Heart right ventricle (tissue), 16 donors: ENCODE measurements at regions of chr16 and their contacts with region 1.

Region 1: DNA sequence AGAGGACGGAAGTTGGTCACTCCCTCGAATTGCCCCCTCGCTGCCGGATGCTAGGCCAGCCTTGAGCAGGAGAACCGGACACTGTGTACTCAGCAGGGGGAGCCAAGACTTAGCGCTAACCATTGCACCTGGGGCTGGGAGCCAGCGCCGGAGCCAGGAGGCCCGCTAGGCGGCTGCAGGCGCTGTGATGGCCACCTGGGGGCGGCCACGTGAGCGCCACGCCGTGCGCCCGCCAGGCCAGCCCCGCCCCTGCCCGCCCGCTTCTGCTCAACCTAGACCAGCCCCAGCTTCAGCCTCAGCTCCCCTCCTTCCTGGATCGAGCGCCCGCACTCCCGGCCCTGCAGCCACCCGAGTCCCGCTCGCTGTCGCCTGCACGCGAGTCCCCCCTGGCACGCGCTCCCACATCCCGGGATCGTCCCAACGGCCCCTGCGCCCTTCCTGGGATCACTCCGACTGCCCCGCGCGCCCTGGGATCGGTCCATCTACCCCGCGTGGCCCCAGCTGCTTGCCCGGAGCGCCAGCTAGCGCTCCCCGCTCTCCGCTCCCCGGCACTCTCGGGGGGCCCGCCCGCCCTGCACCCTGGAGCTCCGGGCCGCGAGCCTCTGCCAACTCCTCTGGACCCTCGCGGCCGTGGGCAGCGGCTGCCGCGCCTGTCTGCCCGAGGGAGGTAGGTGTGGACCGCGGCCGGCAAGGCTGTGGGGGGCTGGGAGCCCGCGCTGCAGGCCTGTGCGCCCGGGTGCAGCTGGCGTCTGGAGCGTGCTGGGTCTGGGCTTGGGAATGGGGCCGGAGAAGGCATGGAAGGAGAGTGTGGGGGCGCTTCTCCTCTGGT is at the start of gene EEF2K:
- DNase-seq: peak; percentile 90 to 93
- ATAC-seq: peak; percentile 91 to 96 (median 94)
- H3K4me3 ChIP-seq: peak within 1 kb of the TSS; percentile 74 to 97 (median 88)
- H3K27ac ChIP-seq: peak within 1 kb of the TSS; percentile 84 to 97 (median 92)
- H3K4me1 ChIP-seq: peaks cover 0 to 52% (median 29%) of the 10 kb centered on the region in 9 donors
- H3K27me3 ChIP-seq: no peaks in the 10 kb centered on the region
- CTCF ChIP-seq: peak; percentile 74 to 96 (median 91)
- total RNA-seq, gene EEF2K: 17.2 to 38.9 (median 23.2) TPM

Region 2: DNA sequence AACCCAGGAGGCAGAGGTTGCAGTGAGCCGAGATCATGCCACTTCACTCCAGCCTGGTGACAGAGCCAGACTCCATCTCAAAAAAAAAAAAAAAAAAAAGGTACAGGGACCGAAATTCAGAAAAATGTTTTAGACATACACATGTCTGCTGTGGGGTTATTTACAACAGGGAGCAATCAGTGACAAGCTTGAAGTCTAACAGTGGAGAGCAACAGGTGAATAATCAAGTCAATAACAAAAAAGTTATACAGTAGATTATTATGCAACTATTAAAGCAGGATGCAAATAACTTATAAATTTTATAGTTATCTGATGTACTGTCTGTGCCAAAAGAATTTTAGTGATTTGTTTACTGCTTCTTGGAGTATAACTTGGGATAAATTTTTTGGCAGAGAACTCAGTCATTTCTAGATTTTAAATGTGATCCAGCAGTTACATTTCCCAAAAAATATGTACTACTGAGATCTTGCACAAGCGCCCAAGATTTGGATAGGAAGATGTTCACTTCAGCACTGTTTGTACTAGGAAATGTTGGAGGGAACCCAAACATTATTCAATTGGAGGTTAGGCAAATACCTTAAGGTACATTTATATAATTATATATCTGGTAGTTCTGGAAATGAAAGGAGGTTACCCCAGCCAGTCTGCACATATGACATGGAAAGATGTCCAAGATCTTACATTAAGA is 33.9 kb after region 1 on chr16:
- intact Hi-C with region 1: loop called in 1 of 10 experiments (anchors 5 kb)
- DNase-seq: no peak
- ATAC-seq: peak in 2 of 8 donors; percentile 25 to 71
- H3K4me3 ChIP-seq: no peak overlapping the region
- H3K27ac ChIP-seq: peak overlapping the region in 5 of 10 donors; percentile 2 to 68 (median 37)
- H3K4me1 ChIP-seq: peaks cover 0 to 36% (median 9%) of the 10 kb centered on the region in 9 donors
- H3K27me3 ChIP-seq: no peaks in the 10 kb centered on the region
- CTCF ChIP-seq: no peak

Region 3: DNA sequence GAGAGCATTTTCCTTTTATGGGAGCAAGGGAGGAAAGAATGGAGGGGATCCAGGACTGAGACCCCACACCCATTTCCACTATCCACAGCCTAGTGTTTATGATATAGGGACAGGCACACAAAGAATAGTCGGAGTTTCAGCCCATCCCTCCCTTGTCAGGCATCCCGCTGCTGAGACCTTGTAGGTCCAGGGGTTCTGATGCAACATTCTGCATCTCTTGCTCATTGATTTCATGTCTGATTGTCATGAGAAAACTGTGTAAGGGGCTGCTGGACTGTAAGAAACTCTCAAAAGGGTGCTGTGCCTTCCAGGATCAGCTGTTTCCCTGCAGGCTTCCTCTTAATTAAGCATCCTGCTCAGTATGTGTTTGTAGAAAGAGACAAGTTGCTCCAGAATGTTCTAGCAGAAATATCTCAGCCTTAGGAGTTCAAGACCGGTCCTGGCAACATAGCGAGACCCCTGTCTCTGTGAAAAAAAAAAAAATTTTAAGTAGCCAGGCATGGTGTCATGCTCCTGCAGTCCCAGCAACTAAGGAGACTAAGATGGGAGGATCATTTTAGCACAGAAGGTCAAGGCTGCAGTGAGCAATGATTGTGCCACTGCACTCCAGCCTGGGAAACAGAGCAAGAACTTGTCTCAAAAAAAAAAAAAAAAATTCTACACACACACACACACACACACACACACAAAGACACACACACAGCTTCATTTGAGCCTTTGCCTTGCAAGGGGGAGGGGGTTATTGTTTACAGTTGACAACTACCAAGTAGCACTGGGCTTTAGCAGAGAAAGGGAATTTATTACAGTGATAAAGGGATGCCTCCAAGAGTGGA is 85.8 kb after region 1 on chr16:
- intact Hi-C with region 1: loop called in 6 of 10 experiments (anchors 1 to 5 kb)
- DNase-seq: no peak
- ATAC-seq: no peak
- H3K4me3 ChIP-seq: no peak overlapping the region
- H3K27ac ChIP-seq: no peak overlapping the region
- H3K4me1 ChIP-seq: peaks cover 0 to 8% (median 6%) of the 10 kb centered on the region in 9 donors
- H3K27me3 ChIP-seq: no peaks in the 10 kb centered on the region
- CTCF ChIP-seq: no peak

Region 4: DNA sequence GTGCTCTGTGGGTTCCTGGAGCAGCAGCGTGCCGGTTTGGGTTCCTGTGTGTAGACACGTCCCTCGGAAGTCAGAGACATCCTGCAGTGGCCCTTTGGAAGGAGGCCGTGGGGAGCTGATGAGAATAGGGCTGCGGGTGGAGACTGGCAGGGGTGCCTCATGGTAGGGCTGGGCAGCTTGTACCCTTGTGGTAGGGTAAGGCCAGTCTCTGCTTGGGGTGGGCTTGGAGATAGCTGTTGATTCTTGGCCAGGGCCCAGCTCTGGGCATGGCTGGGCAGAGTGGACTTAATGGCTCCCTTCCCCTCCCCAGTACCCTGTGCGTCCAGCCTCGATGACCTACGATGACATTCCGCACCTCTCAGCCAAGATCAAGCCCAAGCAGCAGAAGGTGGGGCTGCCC is 101.6 kb after region 1 on chr16:
- intact Hi-C with region 1: no loop called
- DNase-seq: no peak
- ATAC-seq: no peak
- H3K4me3 ChIP-seq: no peak overlapping the region
- H3K27ac ChIP-seq: no peak overlapping the region
- H3K4me1 ChIP-seq: no peaks in the 10 kb centered on the region
- H3K27me3 ChIP-seq: no peaks in the 10 kb centered on the region
- CTCF ChIP-seq: no peak

Region 5: DNA sequence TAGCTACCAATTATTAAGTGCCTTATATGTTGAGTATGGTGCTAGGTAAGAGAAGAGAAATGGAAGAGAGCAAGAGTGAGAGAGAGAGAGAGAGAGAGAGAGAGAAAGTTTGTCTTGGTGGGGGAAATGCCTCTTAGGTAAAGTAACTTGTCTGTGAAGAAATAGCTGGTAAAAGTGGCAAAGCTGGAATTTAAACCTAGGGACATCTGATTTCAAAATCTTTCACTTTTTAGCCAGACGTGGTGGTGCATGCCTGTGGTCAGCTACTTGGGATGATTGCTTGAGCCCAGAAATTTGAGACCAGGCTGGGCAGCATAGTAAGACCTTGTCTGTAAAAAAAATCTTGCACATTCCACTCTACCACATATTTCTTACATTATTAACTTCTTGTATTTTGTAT is 191.2 kb after region 1 on chr16:
- intact Hi-C with region 1: no loop called
- DNase-seq: no peak
- ATAC-seq: no peak
- H3K4me3 ChIP-seq: no peak overlapping the region
- H3K27ac ChIP-seq: no peak overlapping the region
- H3K4me1 ChIP-seq: peaks cover 0 to 11% (median 0%) of the 10 kb centered on the region in 9 donors
- H3K27me3 ChIP-seq: no peaks in the 10 kb centered on the region
- CTCF ChIP-seq: no peak

Region 6: GRCh38 chr16:23227529-23227928 is 1021.3 kb after region 1 on chr16:
- intact Hi-C with region 1: no loop called
- DNase-seq: no peak
- ATAC-seq: no peak
- H3K4me3 ChIP-seq: no peak overlapping the region
- H3K27ac ChIP-seq: no peak overlapping the region
- H3K4me1 ChIP-seq: no peaks in the 10 kb centered on the region
- H3K27me3 ChIP-seq: no peaks in the 10 kb centered on the region
- CTCF ChIP-seq: no peak

Region 7: GRCh38 chr16:23334457-23334853 is 1128.2 kb after region 1 on chr16:
- intact Hi-C with region 1: no loop called
- DNase-seq: no peak
- ATAC-seq: no peak
- H3K4me3 ChIP-seq: no peak overlapping the region
- H3K27ac ChIP-seq: no peak overlapping the region
- H3K4me1 ChIP-seq: no peaks in the 10 kb centered on the region
- H3K27me3 ChIP-seq: peaks cover 0 to 7% (median 0%) of the 10 kb centered on the region in 7 donors
- CTCF ChIP-seq: no peak